Endothelial cell of umbilical vein (primary cell): ENCODE measurements at regions of chr11 and their contacts with region 1.

Region 1: GRCh38 chr11:114307524-114308203 is 11.5 kb downstream of the NNMT start:
- DNase-seq: peak; percentile 91
- H3K4me3 ChIP-seq: peak overlapping the region in 2 of 3 experiments; percentile 10 to 39
- H3K27ac ChIP-seq: peak overlapping the region; percentile 79
- H3K4me1 ChIP-seq: peaks cover 29% of the 10 kb centered on the region
- H3K27me3 ChIP-seq: no peaks in the 10 kb centered on the region
- CTCF ChIP-seq: no peak
- POLR2A ChIP-seq: peak; percentile 15

Region 2: DNA sequence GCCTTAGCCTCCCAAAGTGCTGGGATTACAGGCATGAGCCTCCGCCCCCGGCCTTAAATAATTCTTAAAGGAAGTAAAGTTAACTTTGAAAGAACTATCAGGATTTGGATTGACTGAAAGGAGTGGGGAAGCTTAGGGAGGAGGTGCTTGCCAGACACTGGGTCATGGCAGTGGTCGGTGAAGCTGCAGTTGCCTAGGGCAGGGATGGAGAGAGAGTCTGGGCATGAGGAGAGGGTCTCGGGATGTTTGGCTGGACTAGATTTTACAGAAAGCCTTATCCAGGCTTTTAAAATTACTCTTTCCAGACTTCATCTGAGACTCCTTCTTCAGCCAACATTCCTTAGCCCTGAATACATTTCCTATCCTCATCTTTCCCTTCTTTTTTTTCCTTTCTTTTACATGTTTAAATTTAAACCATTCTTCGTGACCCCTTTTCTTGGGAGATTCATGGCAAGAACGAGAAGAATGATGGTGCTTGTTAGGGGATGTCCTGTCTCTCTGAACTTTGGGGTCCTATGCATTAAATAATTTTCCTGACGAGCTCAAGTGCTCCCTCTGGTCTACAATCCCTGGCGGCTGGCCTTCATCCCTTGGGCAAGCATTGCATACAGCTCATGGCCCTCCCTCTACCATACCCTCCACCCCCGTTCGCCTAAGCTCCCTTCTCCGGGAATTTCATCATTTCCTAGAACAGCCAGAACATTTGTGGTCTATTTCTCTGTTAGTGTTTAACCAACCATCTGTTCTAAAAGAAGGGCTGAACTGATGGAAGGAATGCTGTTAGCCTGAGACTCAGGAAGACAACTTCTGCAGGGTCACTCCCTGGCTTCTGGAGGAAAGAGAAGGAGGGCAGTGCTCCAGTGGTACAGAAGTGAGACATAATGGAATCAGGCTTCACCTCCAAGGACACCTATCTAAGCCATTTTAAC is 11.7 kb before region 1 on chr11 and contains the start of gene NNMT:
- CTCF ChIA-PET with region 1: interaction called, 41 read pairs
- POLR2A ChIA-PET with region 1: interaction called, 33 read pairs
- dilution Hi-C with region 1: no loop called
- intact Hi-C with region 1: loop called (anchors 1 kb)
- DNase-seq: peak; percentile 97
- H3K4me3 ChIP-seq: peak within 1 kb of the TSS; percentile 85 to 99 (median 96)
- H3K27ac ChIP-seq: peak within 1 kb of the TSS; percentile 100
- H3K4me1 ChIP-seq: peaks cover 70% of the 10 kb centered on the region
- H3K27me3 ChIP-seq: no peaks in the 10 kb centered on the region
- CTCF ChIP-seq: peak in 1 of 2 donors; percentile 11
- POLR2A ChIP-seq: peak; percentile 86
- total RNA-seq, gene NNMT: 300 and 330 TPM in 2 replicates